CD4-positive, alpha-beta T cell (primary cell): ENCODE measurements at regions of chr16 and their contacts with region 1.

Region 1: GRCh38 chr16:48164907-48165726 is 9.3 kb upstream of the ABCC12 start:
- DNase-seq: peak; percentile 37 to 79 (median 57)
- ATAC-seq: peak; percentile 81
- H3K4me3 ChIP-seq: no peak overlapping the region
- H3K4me3 Mint-ChIP-seq: no peak overlapping the region
- H3K27ac ChIP-seq: no peak overlapping the region
- H3K27ac Mint-ChIP-seq: no peak overlapping the region
- H3K4me1 ChIP-seq: peaks cover 5% of the 10 kb centered on the region
- H3K4me1 Mint-ChIP-seq: peaks cover 5% of the 10 kb centered on the region
- H3K27me3 ChIP-seq: no peaks in the 10 kb centered on the region
- H3K27me3 Mint-ChIP-seq: no peaks in the 10 kb centered on the region
- CTCF ChIP-seq: peak; percentile 81

Region 2: GRCh38 chr16:46853713-46854443 is 1311.2 kb before region 1 on chr16:
- CTCF ChIA-PET with region 1: interaction called, 4 read pairs
- POLR2A ChIA-PET with region 1: no interaction called
- intact Hi-C with region 1: loop called in 1 of 2 experiments (anchors 5 kb)
- DNase-seq: peak; percentile 30 to 74 (median 52)
- ATAC-seq: no peak
- H3K4me3 ChIP-seq: no peak overlapping the region
- H3K4me3 Mint-ChIP-seq: no peak overlapping the region
- H3K27ac ChIP-seq: no peak overlapping the region
- H3K27ac Mint-ChIP-seq: no peak overlapping the region
- H3K4me1 ChIP-seq: no peaks in the 10 kb centered on the region
- H3K4me1 Mint-ChIP-seq: no peaks in the 10 kb centered on the region
- H3K27me3 ChIP-seq: no peaks in the 10 kb centered on the region
- H3K27me3 Mint-ChIP-seq: peaks cover 3% of the 10 kb centered on the region
- CTCF ChIP-seq: peak; percentile 61

Region 3: DNA sequence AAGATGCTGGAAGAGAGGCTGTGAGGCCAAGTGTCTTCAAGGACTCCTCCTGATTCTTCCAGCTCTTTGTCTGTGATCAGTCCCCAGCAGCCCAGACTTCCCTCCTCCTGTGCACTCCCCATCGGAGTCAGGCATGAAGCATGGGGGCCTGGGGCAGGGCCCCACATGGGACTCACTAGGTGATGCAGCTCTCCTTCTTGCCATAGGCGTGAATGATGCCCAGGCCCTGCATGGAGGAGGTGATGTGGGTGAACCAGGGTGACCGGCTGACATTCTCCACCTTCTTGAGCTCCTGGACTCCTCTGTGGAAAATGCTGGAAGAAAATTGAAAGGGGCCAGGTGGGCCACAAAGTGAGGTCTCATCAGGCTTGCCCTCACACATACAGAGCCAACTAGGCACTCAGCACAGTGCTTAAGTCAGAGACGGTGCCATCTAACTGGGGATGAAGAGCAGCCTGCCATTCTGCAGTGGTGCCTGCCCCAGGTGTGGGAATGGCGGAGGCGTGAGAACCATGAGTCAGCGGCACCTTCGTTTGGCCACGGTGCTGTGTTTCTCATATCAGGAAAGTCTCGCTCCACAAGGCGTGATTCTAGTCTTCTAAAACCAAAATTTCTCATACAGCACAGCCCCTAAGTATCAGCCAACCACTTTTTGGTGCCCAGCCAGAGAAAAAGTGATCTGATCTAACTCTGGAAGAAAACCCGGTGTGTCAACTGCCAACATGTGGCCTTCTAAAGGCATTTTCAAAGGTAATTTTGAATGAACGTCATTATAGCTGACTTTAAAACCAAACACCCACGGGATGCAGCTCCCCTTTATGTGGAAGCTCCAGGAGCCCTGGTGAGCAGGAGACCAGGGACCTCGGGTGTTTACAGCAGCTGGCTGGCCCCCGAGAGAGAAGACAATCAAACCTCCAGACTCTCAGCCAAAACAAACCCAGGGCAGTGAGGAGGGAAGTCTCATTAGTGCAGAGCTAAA is 64.1 kb before region 1 on chr16:
- CTCF ChIA-PET with region 1: no interaction called
- POLR2A ChIA-PET with region 1: no interaction called
- intact Hi-C with region 1: no loop called
- DNase-seq: no peak
- ATAC-seq: no peak
- H3K4me3 ChIP-seq: no peak overlapping the region
- H3K4me3 Mint-ChIP-seq: no peak overlapping the region
- H3K27ac ChIP-seq: no peak overlapping the region
- H3K27ac Mint-ChIP-seq: no peak overlapping the region
- H3K4me1 ChIP-seq: peaks cover 4% of the 10 kb centered on the region
- H3K4me1 Mint-ChIP-seq: no peaks in the 10 kb centered on the region
- H3K27me3 ChIP-seq: peaks cover 0 to 5% of the 10 kb centered on the region in 2 experiments
- H3K27me3 Mint-ChIP-seq: peaks cover 11% of the 10 kb centered on the region
- CTCF ChIP-seq: no peak

Region 4: DNA sequence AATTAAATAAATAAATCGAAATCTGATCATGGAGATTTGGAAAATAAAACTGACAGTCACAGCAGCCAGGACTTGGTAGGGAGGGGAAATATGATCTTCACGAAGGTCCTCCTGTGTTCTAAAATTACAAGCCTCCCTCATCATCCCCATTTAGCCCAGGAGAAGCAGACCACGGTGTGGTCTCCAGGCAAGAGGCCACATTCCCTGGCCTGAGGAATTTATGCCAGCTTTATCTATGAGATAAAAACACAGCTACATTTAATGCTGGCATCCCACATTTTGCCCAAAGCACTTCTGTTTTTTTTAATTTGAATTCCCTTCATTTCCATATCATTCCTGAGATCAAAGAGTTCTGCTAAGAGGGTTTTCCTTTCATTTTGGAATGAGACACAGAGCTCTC is 52.5 kb before region 1 on chr16:
- CTCF ChIA-PET with region 1: no interaction called
- POLR2A ChIA-PET with region 1: no interaction called
- intact Hi-C with region 1: no loop called
- DNase-seq: no peak
- ATAC-seq: no peak
- H3K4me3 ChIP-seq: no peak overlapping the region
- H3K4me3 Mint-ChIP-seq: no peak overlapping the region
- H3K27ac ChIP-seq: no peak overlapping the region
- H3K27ac Mint-ChIP-seq: no peak overlapping the region
- H3K4me1 ChIP-seq: no peaks in the 10 kb centered on the region
- H3K4me1 Mint-ChIP-seq: no peaks in the 10 kb centered on the region
- H3K27me3 ChIP-seq: peaks cover 0 to 2% of the 10 kb centered on the region in 2 experiments
- H3K27me3 Mint-ChIP-seq: peaks cover 6% of the 10 kb centered on the region
- CTCF ChIP-seq: no peak

Region 5: GRCh38 chr16:48206594-48207242 is 41.6 kb after region 1 on chr16:
- CTCF ChIA-PET with region 1: no interaction called
- POLR2A ChIA-PET with region 1: no interaction called
- intact Hi-C with region 1: no loop called
- DNase-seq: no peak
- ATAC-seq: no peak
- H3K4me3 ChIP-seq: no peak overlapping the region
- H3K4me3 Mint-ChIP-seq: no peak overlapping the region
- H3K27ac ChIP-seq: no peak overlapping the region
- H3K27ac Mint-ChIP-seq: no peak overlapping the region
- H3K4me1 ChIP-seq: no peaks in the 10 kb centered on the region
- H3K4me1 Mint-ChIP-seq: no peaks in the 10 kb centered on the region
- H3K27me3 ChIP-seq: no peaks in the 10 kb centered on the region
- H3K27me3 Mint-ChIP-seq: peaks cover 5% of the 10 kb centered on the region
- CTCF ChIP-seq: no peak

Region 6: DNA sequence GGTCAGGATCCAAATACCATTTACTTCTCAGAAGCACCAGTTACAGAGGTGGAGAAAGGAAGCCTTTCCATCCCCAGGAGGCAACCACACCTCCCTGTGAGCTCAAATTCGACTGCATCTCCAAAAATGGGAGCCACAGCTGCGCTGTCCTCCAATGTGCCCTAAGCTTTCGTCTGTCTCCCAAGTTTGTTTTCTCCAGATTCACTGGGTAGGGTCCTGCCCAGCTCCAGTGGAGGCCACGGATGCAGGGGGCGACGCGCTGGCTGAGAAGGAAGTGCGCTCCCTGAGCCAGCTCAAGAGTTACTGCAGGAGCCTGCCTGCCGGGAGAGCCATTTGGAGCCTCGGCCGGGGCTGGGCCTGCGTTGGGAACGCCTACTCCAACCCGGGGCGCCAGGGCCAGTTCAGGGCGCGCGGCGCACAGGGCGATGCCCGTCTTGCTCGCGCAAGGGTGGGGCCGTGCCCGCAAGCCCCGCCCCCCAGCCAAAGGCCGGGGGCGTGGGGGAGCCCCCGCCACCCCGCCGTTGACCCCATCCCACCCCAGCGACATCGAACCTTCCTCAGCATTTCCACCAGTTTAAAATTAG is 200.6 kb after region 1 on chr16:
- CTCF ChIA-PET with region 1: no interaction called
- POLR2A ChIA-PET with region 1: no interaction called
- intact Hi-C with region 1: no loop called
- DNase-seq: peak; percentile 49 to 86 (median 68)
- ATAC-seq: peak; percentile 82
- H3K4me3 ChIP-seq: peak overlapping the region; percentile 67
- H3K4me3 Mint-ChIP-seq: peak overlapping the region; percentile 100
- H3K27ac ChIP-seq: peak overlapping the region; percentile 81
- H3K27ac Mint-ChIP-seq: peak overlapping the region; percentile 98
- H3K4me1 ChIP-seq: peaks cover 17% of the 10 kb centered on the region
- H3K4me1 Mint-ChIP-seq: peaks cover 55% of the 10 kb centered on the region
- H3K27me3 ChIP-seq: no peaks in the 10 kb centered on the region
- H3K27me3 Mint-ChIP-seq: no peaks in the 10 kb centered on the region
- CTCF ChIP-seq: no peak